ENCODE measurements at regions of chr5 and their contacts with region 1.

Region 1: DNA sequence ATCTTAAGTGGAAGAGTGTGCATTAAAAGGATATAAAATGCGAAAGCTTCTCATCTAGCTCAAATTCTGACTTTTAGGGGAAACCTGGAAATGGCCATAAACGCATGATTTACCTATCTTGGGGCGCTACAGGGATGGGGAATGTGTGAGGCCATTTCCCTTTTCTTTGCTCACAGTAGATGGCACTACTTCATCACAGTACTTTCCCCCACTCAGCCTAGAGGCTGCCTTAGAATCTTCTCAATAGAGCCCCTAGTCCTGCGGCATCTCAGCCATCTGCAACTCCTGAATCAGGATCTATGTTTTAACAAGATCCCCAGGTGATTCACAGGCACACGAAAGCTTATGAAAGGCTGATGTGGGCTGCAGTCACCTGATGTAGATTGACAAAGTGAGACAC is 110.8 kb downstream of the LHFPL2 start:
- DNase-seq: peak; percentile 46 to 57
- H3K4me3 ChIP-seq: no peak overlapping the region
- H3K4me3 Mint-ChIP-seq: no peak overlapping the region
- H3K27ac Mint-ChIP-seq: no peak overlapping the region
- H3K4me1 ChIP-seq: no peaks in the 10 kb centered on the region
- H3K4me1 Mint-ChIP-seq: peaks cover 17% of the 10 kb centered on the region
- H3K27me3 ChIP-seq: no peaks in the 10 kb centered on the region
- H3K27me3 Mint-ChIP-seq: no peaks in the 10 kb centered on the region
- CTCF ChIP-seq: peak in 1 of 2 experiments; percentile 72

Region 2: GRCh38 chr5:78430866-78431265 is 107.0 kb before region 1 on chr5:
- CTCF ChIA-PET with region 1: no interaction called
- POLR2A ChIA-PET with region 1: no interaction called
- intact Hi-C with region 1: no loop called
- DNase-seq: no peak
- H3K4me3 ChIP-seq: no peak overlapping the region
- H3K4me3 Mint-ChIP-seq: no peak overlapping the region
- H3K27ac Mint-ChIP-seq: no peak overlapping the region
- H3K4me1 ChIP-seq: peaks cover 5% of the 10 kb centered on the region
- H3K4me1 Mint-ChIP-seq: peaks cover 9% of the 10 kb centered on the region
- H3K27me3 ChIP-seq: no peaks in the 10 kb centered on the region
- H3K27me3 Mint-ChIP-seq: no peaks in the 10 kb centered on the region
- CTCF ChIP-seq: no peak

Region 3: GRCh38 chr5:78467752-78468357 is 70.0 kb before region 1 on chr5:
- CTCF ChIA-PET with region 1: interaction called, 10 read pairs
- POLR2A ChIA-PET with region 1: no interaction called
- intact Hi-C with region 1: loop called (anchors 1 kb)
- DNase-seq: peak in 1 of 2 experiments; percentile 17
- H3K4me3 ChIP-seq: no peak overlapping the region
- H3K4me3 Mint-ChIP-seq: no peak overlapping the region
- H3K27ac Mint-ChIP-seq: no peak overlapping the region
- H3K4me1 ChIP-seq: no peaks in the 10 kb centered on the region
- H3K4me1 Mint-ChIP-seq: no peaks in the 10 kb centered on the region
- H3K27me3 ChIP-seq: no peaks in the 10 kb centered on the region
- H3K27me3 Mint-ChIP-seq: no peaks in the 10 kb centered on the region
- CTCF ChIP-seq: peak; percentile 62 to 73

Region 4: GRCh38 chr5:78627175-78627574 is 89.4 kb after region 1 on chr5:
- CTCF ChIA-PET with region 1: interaction called, 5 read pairs
- POLR2A ChIA-PET with region 1: no interaction called
- intact Hi-C with region 1: loop called (anchors 1 kb)
- DNase-seq: no peak
- H3K4me3 ChIP-seq: no peak overlapping the region
- H3K4me3 Mint-ChIP-seq: no peak overlapping the region
- H3K27ac Mint-ChIP-seq: no peak overlapping the region
- H3K4me1 ChIP-seq: peaks cover 28% of the 10 kb centered on the region
- H3K4me1 Mint-ChIP-seq: peaks cover 39% of the 10 kb centered on the region
- H3K27me3 ChIP-seq: no peaks in the 10 kb centered on the region
- H3K27me3 Mint-ChIP-seq: no peaks in the 10 kb centered on the region
- CTCF ChIP-seq: peak in 1 of 2 experiments; percentile 60

Region 5: GRCh38 chr5:78648359-78649210 is 110.8 kb after region 1 on chr5 and contains the start of gene LHFPL2:
- CTCF ChIA-PET with region 1: interaction called, 3 read pairs
- POLR2A ChIA-PET with region 1: no interaction called
- intact Hi-C with region 1: loop called (anchors 1 kb)
- DNase-seq: peak; percentile 74 to 83
- H3K4me3 ChIP-seq: peak within 1 kb of the TSS; percentile 76
- H3K4me3 Mint-ChIP-seq: peak within 1 kb of the TSS; percentile 97
- H3K27ac Mint-ChIP-seq: peak within 1 kb of the TSS; percentile 80
- H3K4me1 ChIP-seq: peaks cover 15% of the 10 kb centered on the region
- H3K4me1 Mint-ChIP-seq: peaks cover 20% of the 10 kb centered on the region
- H3K27me3 ChIP-seq: no peaks in the 10 kb centered on the region
- H3K27me3 Mint-ChIP-seq: no peaks in the 10 kb centered on the region
- CTCF ChIP-seq: no peak
- total RNA-seq, gene LHFPL2: 44.0 and 49.7 TPM in 2 replicates

Region 6: DNA sequence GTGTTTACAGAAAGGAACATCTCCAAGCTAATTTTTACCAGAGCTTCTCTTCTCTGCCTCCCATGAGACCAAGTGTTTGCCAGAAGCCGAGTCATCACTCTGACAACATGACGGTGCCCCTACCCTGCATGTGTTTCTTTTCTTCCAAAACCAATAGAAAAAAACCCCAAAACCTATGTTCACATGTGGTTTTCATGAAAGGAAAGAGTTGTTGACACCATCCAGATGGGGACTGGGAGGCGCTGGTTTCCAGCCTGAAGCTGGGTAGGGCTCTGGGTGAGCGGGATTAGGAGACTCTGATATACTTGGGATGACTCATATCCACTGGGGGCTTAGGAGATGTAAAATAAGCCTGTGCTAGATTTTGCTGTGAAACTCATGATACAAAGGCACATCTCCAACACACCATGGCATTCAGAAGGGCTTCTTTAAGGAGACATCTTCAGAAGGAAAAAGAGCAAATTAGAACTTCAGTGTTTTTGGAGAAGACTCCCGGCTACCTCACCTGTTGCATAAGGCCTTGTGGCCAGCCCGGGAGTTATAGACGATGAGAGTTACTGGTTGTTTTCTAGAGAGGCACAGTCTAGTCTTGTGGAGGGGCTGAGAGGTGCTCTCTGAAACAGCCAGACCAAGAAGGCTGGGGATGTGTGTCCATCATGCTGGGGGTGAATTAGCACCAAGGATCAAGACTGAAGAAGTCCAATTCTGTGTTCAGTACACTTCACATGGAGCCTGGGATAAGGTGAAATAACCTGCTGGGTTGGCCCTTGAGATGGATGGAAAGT is 219.6 kb after region 1 on chr5:
- CTCF ChIA-PET with region 1: no interaction called
- POLR2A ChIA-PET with region 1: no interaction called
- intact Hi-C with region 1: no loop called
- DNase-seq: peak in 1 of 2 experiments; percentile 15
- H3K4me3 ChIP-seq: no peak overlapping the region
- H3K4me3 Mint-ChIP-seq: no peak overlapping the region
- H3K27ac Mint-ChIP-seq: peak overlapping the region; percentile 71
- H3K4me1 ChIP-seq: peaks cover 28% of the 10 kb centered on the region
- H3K4me1 Mint-ChIP-seq: peaks cover 35% of the 10 kb centered on the region
- H3K27me3 ChIP-seq: no peaks in the 10 kb centered on the region; the same call in 1 of the 2 replicates
- H3K27me3 Mint-ChIP-seq: no peaks in the 10 kb centered on the region
- CTCF ChIP-seq: no peak

Region 7: GRCh38 chr5:78927657-78928282 is 389.9 kb after region 1 on chr5:
- CTCF ChIA-PET with region 1: interaction called, 11 read pairs
- POLR2A ChIA-PET with region 1: no interaction called
- intact Hi-C with region 1: no loop called
- DNase-seq: peak; percentile 69 to 79
- H3K4me3 ChIP-seq: no peak overlapping the region
- H3K4me3 Mint-ChIP-seq: peak overlapping the region; percentile 11
- H3K27ac Mint-ChIP-seq: peak overlapping the region; percentile 79
- H3K4me1 ChIP-seq: peaks cover 29% of the 10 kb centered on the region
- H3K4me1 Mint-ChIP-seq: peaks cover 33% of the 10 kb centered on the region
- H3K27me3 ChIP-seq: no peaks in the 10 kb centered on the region
- H3K27me3 Mint-ChIP-seq: no peaks in the 10 kb centered on the region
- CTCF ChIP-seq: no peak

Region 8: DNA sequence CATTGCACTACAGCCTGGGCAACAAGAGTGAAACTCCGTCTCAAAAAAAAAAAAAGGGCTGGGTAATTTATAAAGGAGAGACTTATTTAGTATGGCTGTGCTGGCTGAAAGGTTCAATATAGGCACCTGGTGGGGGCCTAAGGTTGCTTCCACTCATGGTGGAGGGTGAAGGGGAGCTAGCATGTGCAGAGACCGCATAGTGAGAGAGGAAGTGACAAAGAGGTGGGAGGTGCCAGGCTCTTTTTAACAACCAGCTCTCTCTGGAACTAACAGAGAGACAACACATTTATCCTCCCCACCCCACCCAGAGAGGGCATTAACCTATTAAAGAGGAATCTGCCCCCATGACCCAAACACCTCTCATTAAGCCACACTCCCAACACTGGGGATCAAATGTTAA is 1746.9 kb after region 1 on chr5:
- CTCF ChIA-PET with region 1: no interaction called
- POLR2A ChIA-PET with region 1: no interaction called
- intact Hi-C with region 1: no loop called
- DNase-seq: no peak
- H3K4me3 ChIP-seq: no peak overlapping the region
- H3K4me3 Mint-ChIP-seq: no peak overlapping the region
- H3K27ac Mint-ChIP-seq: no peak overlapping the region
- H3K4me1 ChIP-seq: no peaks in the 10 kb centered on the region
- H3K4me1 Mint-ChIP-seq: no peaks in the 10 kb centered on the region
- H3K27me3 ChIP-seq: no peaks in the 10 kb centered on the region
- H3K27me3 Mint-ChIP-seq: no peaks in the 10 kb centered on the region
- CTCF ChIP-seq: no peak

Measured in Caco-2 (cell line).